ENCODE measurements at regions of chr7 and their contacts with region 1.

Region 1: DNA sequence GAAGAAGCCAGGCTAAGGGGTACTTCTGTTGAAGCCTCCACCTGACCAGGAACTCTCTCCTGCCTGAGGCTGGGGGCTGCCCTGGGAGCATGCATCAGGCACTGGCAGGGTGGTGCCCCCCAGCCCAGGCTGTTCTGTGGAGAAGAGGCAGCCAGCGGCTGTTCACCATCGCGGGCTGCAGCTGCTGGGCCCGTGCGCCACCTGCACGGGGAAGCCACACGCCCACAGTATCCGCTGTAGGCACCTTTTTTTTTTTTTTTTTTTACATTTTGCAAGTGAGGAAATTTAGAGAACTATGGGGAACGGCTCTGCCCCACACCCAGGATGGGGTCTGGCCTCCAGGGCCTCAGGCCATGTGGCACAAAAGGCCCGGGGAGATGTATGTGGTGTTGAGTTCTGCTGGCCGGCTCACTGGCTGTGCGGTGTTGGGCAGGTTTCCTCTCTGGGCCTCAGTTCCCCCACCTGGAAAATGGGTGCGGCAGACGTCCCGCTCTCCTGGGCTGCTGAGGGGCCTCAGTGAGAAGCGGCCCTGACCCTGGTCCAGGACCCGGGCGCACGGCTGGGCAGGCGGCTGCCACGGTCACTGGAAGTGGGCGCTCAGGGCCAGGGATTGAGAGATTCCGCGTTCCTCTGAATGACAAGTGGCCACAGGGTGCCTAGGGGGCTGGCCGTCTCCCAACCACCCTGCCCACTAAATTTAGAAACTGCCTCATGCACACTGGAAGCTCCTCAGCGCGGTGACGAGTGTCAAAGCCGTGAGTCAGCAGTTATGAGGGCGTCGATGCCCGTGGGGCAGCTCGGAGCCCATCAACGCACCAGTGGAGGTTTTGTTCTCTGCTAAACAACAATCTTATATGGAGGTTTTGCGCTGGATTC is 8.8 kb upstream of the INTS1 start:
- DNase-seq: peak; percentile 78 to 86
- ATAC-seq: peak; percentile 90 to 96 (median 94)
- H3K4me3 ChIP-seq: peak overlapping the region in 6 of 10 donors; percentile 14 to 39 (median 23)
- H3K27ac ChIP-seq: peak overlapping the region; percentile 87 to 100 (median 97)
- H3K4me1 ChIP-seq: peaks cover 4 to 29% (median 23%) of the 10 kb centered on the region in 9 donors
- H3K27me3 ChIP-seq: no peaks in the 10 kb centered on the region
- CTCF ChIP-seq: peak in 1 of 9 donors; percentile 8

Region 2: GRCh38 chr7:1532483-1533424 is 19.7 kb after region 1 on chr7:
- intact Hi-C with region 1: loop called in 3 of 10 experiments (anchors 1 to 2 kb)
- DNase-seq: peak; percentile 69 to 88
- ATAC-seq: peak; percentile 19 to 62 (median 38)
- H3K4me3 ChIP-seq: peak overlapping the region in 9 of 10 donors; percentile 60 to 73 (median 66)
- H3K27ac ChIP-seq: peak overlapping the region; percentile 69 to 100 (median 98)
- H3K4me1 ChIP-seq: peaks cover 19 to 69% (median 60%) of the 10 kb centered on the region in 9 donors
- H3K27me3 ChIP-seq: no peaks in the 10 kb centered on the region
- CTCF ChIP-seq: no peak

Region 3: GRCh38 chr7:1537535-1538412 is 24.8 kb after region 1 on chr7:
- intact Hi-C with region 1: loop called in 3 of 10 experiments (anchors 1 to 2 kb)
- DNase-seq: peak; percentile 94 to 97
- ATAC-seq: peak; percentile 29 to 65 (median 50)
- H3K4me3 ChIP-seq: peak overlapping the region; percentile 26 to 69 (median 55)
- H3K27ac ChIP-seq: peak overlapping the region; percentile 92 to 100 (median 99)
- H3K4me1 ChIP-seq: peaks cover 26 to 80% (median 57%) of the 10 kb centered on the region in 9 donors
- H3K27me3 ChIP-seq: no peaks in the 10 kb centered on the region
- CTCF ChIP-seq: no peak

Region 4: GRCh38 chr7:1555809-1556540 is 43.0 kb after region 1 on chr7 and contains the start of gene TMEM184A:
- intact Hi-C with region 1: loop called in 9 of 10 experiments (anchors 2 to 10 kb)
- DNase-seq: peak in 1 of 2 donors; percentile 47
- ATAC-seq: peak in 7 of 8 donors; percentile 14 to 61 (median 36)
- H3K4me3 ChIP-seq: no peak within 1 kb of the TSS
- H3K27ac ChIP-seq: no peak within 1 kb of the TSS
- H3K4me1 ChIP-seq: peaks cover 8 to 26% (median 19%) of the 10 kb centered on the region in 9 donors
- H3K27me3 ChIP-seq: no peaks in the 10 kb centered on the region
- CTCF ChIP-seq: peak in 7 of 9 donors; percentile 42 to 59 (median 49)
- total RNA-seq, gene TMEM184A: 0.09 to 0.85 (median 0.51) TPM

Measured in heart right ventricle (tissue), 16 donors.